ENCODE measurements at regions of chr14 and their contacts with region 1.

Region 1: GRCh38 chr14:73472185-73473114 is 14.1 kb upstream of the NUMB start:
- DNase-seq: peak; percentile 52 to 74
- ATAC-seq: peak; percentile 85 to 87
- H3K4me3 ChIP-seq: no peak overlapping the region
- H3K27ac ChIP-seq: no peak overlapping the region
- H3K4me1 ChIP-seq: peaks cover 15% of the 10 kb centered on the region; the same call in 1 of the 3 replicates
- CTCF ChIP-seq: peak; percentile 88
- EP300 ChIP-seq: no peak
- POLR2A ChIP-seq: no peak
- RAD21 ChIP-seq: peak; percentile 94 to 96

Region 2: DNA sequence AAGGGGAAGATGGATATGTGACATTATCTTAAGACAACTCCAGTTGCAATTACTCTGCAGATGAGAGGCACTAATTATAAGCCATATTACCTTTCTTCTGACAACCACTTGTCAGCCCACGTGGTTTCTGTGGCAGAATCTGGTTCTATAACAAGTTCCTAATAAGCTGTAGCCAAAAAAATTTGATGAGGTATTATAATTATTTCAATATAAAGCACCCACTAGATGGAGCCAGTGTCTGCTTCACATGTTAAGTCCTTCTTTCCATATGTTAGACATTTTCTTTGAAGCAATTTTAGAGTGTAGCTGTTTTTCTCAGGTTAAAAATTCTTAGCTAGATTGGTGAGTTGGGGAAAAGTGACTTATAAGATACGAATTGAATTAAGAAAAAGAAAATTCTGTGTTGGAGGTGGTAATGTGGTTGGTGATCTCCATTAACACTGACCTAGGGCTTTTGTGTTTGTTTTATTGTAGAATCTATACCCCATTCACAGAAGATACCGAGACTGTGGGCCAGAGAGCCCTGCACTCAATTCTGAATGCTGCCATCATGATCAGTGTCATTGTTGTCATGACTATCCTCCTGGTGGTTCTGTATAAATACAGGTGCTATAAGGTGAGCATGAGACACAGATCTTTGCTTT is 299.2 kb before region 1 on chr14:
- CTCF ChIA-PET with region 1: interaction called, 47 read pairs
- POLR2A ChIA-PET with region 1: no interaction called
- DNase-seq: peak; percentile 18 to 60
- ATAC-seq: peak; percentile 70 to 71
- H3K4me3 ChIP-seq: no peak overlapping the region
- H3K27ac ChIP-seq: no peak overlapping the region
- H3K4me1 ChIP-seq: no peaks in the 10 kb centered on the region
- CTCF ChIP-seq: peak; percentile 84
- EP300 ChIP-seq: no peak
- POLR2A ChIP-seq: no peak
- RAD21 ChIP-seq: peak; percentile 82 to 85

Region 3: DNA sequence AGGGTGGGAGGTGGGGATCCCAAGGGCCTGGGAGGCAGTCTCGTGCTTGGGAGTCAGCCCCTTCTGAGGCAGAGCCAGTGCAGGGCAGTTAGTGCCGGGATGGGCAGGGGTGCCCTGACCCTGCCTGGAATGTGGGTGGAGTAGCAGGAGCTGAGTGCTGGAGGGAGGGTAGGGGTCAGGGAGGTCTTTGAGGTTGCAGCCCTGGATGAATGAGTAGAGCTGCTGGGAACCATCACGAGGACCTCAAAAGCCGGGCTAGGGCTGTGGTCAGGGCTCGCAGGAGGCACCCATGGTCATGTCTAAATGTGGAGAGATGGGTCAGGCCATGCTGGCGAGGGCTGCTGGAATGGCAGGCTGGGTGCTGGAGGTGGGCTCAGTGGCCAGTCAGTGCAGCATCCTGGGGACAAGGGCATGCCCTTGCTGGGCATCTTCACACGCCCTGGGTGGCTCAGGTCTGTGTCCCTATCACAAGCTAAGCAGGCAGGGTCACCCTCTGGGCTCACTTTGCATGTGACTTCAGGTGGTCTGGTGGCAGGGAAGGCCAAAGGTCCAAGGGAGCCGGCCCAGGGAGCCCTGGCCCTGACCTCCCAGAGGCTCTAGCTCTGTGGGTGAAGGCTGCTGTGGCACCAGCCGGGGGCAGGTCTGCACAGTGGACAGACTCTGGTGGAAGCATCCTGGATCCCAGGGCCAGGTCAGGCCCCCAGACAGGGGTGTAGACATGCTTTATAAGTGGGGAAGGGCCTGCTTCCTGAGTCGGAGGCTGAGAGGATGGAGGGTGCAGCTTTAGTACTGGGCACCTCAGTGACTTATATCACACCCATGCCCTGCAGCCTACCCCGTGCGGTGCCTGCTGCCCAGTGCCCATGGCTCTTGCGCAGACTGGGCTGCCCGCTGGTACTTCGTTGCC is 210.7 kb before region 1 on chr14:
- CTCF ChIA-PET with region 1: interaction called, 13 read pairs
- POLR2A ChIA-PET with region 1: no interaction called
- DNase-seq: no peak
- ATAC-seq: peak in 1 of 2 experiments; percentile 12; a peak in 3 of 6 replicates
- H3K4me3 ChIP-seq: no peak overlapping the region
- H3K27ac ChIP-seq: no peak overlapping the region
- H3K4me1 ChIP-seq: no peaks in the 10 kb centered on the region
- CTCF ChIP-seq: no peak
- EP300 ChIP-seq: no peak
- POLR2A ChIP-seq: no peak
- RAD21 ChIP-seq: no peak

Region 4: DNA sequence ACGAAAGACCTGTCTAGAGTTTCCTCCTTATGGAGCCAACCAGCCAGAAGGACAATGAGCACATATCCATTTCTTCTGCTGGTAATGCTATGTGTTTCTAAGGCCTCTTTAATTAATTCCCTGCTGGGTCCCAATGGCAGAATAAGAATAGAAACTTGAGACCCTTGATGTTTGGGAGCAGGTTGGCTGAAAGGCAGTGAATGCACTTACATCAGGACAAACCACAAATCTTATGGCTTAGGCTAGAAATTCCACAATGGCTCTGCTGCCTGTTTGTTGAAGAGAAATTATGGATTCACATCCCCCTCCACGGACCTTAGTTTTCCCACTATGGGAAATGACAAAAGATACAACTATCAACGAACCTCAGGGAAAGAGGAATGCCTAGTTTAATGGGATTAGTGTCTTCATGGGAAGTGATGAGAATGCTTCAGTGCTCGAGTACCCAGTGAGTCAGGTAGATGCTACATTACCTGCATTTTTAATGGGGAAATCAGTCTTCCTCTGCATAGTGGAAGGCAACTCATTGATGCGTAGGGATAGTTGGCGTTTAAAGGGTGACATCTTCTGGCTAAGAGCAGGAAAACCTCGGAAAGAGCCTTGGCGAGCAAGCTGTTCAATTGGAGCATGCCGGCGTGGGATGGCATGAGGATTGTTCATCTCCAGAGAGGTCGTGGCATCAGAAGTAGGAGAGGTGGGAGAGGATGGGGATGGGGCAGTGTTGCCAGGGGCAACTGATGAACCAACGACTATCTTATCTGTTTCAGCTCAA is 188.7 kb before region 1 on chr14:
- CTCF ChIA-PET with region 1: interaction called, 19 read pairs
- POLR2A ChIA-PET with region 1: no interaction called
- DNase-seq: peak in 1 of 2 experiments; percentile 46
- ATAC-seq: peak; percentile 57 to 77; a peak in 5 of 6 replicates
- H3K4me3 ChIP-seq: no peak overlapping the region
- H3K27ac ChIP-seq: no peak overlapping the region
- H3K4me1 ChIP-seq: 0 out of 3 replicates have a peak, but pooled peaks cover 5% of the 10 kb centered on the region
- CTCF ChIP-seq: peak; percentile 43
- EP300 ChIP-seq: no peak
- POLR2A ChIP-seq: no peak
- RAD21 ChIP-seq: peak; percentile 51 to 69

Region 5: DNA sequence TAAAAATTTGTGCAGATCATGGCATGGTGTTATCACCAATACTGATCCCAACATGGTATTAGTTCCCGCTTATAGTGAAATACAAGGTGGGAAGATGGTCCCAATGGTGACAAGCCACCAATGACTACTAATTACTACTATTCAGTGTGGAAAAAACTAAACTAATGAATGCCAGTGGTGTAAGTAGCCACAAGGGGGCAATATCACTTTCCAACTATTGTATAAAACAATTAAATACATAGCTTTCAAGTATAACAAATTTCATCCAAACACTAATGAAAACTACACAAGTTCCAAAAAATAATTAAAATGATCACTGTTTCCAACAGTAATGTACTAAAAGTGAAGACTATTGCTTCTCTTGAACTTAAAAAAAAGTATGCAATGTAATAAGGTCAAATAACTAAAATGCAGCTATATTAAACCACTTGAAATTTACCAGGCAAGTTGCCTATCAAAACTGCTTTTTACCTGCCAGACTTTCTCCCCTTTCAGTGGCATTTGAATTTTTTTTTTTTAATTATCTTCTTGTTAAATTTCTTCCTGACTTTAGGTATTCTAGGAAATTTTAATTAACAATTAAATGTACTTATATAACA is 177.2 kb before region 1 on chr14:
- CTCF ChIA-PET with region 1: interaction called, 176 read pairs
- POLR2A ChIA-PET with region 1: interaction called, 8 read pairs
- DNase-seq: peak; percentile 43 to 44
- ATAC-seq: peak; percentile 47 to 71; a peak in 3 of 6 replicates
- H3K4me3 ChIP-seq: no peak overlapping the region
- H3K27ac ChIP-seq: peak overlapping the region in 1 of 2 experiments; percentile 58; a peak in 1 of 6 replicates
- H3K4me1 ChIP-seq: peaks cover 23% of the 10 kb centered on the region
- CTCF ChIP-seq: peak; percentile 82
- EP300 ChIP-seq: no peak
- POLR2A ChIP-seq: no peak
- RAD21 ChIP-seq: peak; percentile 59 to 71

Region 6: GRCh38 chr14:73422515-73422914 is 49.9 kb before region 1 on chr14:
- CTCF ChIA-PET with region 1: interaction called, 10 read pairs
- POLR2A ChIA-PET with region 1: no interaction called
- DNase-seq: peak in 1 of 2 experiments; percentile 65
- ATAC-seq: peak in 1 of 2 experiments; percentile 74; a peak in 4 of 6 replicates
- H3K4me3 ChIP-seq: no peak overlapping the region
- H3K27ac ChIP-seq: no peak overlapping the region
- H3K4me1 ChIP-seq: peaks cover 46% of the 10 kb centered on the region
- CTCF ChIP-seq: no peak
- EP300 ChIP-seq: no peak
- POLR2A ChIP-seq: no peak
- RAD21 ChIP-seq: no peak

Region 7: DNA sequence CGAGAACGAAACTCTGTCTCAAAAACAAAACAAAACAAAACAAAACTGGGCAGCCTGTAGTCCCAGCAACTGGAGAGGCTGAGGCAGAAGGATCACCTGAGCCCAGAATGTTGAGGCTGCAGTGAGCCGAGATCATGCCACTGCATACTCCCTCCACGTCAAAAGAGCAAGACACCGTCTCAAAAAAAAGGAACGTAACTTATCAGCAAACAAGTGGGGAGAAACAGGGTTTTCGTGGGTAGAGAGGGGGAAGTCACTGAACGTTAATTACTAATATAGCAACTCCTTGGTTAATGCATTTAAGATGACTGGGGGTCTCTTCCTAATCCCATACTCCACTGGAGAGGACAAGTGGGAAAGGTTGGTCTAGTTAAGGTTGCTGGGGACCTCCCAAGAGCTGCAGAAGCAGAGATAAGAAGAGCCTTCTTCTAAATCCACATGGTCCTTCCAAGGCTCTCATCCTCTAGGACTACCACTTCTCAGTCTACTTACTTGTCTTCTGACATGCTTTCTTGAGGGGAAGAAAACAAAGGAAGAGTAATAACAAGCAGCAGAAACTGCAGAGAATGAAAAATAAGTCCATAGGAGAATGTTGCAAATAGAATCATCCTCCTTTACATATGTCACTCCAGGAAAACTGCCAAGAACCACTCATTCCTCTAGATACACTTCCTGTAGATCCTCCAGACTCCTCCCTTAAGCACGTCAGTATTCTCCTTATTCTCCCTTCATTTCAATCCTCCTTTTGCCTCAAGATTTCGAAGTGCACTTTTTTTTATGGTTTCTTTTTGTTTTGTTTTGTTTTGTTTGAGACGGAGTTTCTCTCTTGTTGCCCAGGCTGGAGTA is 19.9 kb before region 1 on chr14:
- CTCF ChIA-PET with region 1: interaction called, 104 read pairs
- POLR2A ChIA-PET with region 1: no interaction called
- DNase-seq: peak in 1 of 2 experiments; percentile 31
- ATAC-seq: no peak
- H3K4me3 ChIP-seq: no peak overlapping the region
- H3K27ac ChIP-seq: no peak overlapping the region
- H3K4me1 ChIP-seq: peaks cover 42% of the 10 kb centered on the region
- CTCF ChIP-seq: no peak
- EP300 ChIP-seq: no peak
- POLR2A ChIP-seq: no peak
- RAD21 ChIP-seq: no peak

Region 8: GRCh38 chr14:73662487-73662943 is 190.1 kb after region 1 on chr14:
- CTCF ChIA-PET with region 1: no interaction called
- POLR2A ChIA-PET with region 1: no interaction called
- DNase-seq: peak; percentile 53 to 90
- ATAC-seq: peak; percentile 100
- H3K4me3 ChIP-seq: no peak overlapping the region
- H3K27ac ChIP-seq: peak overlapping the region; percentile 55 to 69; a peak in 4 of 6 replicates
- H3K4me1 ChIP-seq: peaks cover 35% of the 10 kb centered on the region
- CTCF ChIP-seq: peak; percentile 52
- EP300 ChIP-seq: no peak
- POLR2A ChIP-seq: no peak
- RAD21 ChIP-seq: peak; percentile 47 to 49

Measured in A549 (cell line).